ENCODE measurements at regions of chr3 and their contacts with region 1.

Region 1: DNA sequence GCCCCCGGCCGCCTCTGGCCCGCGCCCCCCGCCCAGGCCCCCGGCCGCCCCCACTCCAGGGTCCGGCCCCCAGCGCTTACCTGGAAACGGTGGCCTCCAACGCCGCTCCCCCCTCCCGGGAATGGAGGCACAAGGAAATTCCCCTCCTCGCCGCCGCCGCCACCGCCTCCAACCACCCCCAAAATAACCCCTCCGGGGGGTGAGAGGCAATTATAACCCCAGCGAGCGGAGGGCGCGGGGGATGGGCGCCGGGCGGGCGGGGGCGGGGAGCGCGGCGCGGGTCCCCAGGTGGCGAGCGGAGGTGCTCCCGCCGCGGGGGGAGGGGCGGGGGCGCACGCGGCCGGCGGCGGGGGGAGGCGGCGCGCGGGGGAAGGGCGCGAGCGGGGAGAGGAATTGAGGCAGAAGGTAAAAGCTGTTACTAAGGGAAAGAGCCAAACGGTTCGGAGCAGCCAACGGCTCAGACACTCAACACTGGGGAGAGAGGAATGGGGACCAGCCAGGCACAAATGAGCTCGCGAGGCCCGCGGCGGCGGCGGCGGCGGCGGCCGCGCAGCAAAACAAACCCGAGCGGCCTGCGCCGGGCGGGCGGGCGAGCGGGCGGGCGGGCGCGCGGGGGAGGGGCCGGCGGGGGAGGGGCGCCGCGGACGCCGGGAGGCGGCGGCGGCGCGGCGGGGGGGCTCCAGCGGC is at the start of gene TBL1XR1:
- DNase-seq: peak; percentile 93
- ATAC-seq: peak; percentile 88
- total RNA-seq, gene TBL1XR1: 90.8 TPM

Region 2: DNA sequence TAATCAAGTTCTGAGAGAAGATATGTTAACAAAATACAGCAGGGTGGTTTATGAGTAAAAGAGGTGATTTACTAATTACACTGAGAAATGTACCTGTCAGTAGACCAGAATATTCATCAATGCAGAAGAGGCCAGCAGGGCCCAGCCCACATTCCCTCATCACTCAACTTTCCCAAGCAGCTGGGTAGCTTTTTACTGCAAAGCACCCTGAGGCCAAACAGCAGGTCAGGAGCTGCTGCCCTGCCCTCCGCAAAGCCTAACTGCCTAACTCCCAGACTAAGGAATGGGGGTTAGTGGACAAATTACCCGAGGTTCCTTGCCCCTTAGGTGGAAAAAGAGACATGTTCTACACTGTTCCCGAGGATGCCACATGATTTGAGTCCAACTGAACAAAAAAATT is 108.1 kb before region 1 on chr3:
- intact Hi-C with region 1: no loop called
- DNase-seq: no peak
- ATAC-seq: no peak

Region 3: DNA sequence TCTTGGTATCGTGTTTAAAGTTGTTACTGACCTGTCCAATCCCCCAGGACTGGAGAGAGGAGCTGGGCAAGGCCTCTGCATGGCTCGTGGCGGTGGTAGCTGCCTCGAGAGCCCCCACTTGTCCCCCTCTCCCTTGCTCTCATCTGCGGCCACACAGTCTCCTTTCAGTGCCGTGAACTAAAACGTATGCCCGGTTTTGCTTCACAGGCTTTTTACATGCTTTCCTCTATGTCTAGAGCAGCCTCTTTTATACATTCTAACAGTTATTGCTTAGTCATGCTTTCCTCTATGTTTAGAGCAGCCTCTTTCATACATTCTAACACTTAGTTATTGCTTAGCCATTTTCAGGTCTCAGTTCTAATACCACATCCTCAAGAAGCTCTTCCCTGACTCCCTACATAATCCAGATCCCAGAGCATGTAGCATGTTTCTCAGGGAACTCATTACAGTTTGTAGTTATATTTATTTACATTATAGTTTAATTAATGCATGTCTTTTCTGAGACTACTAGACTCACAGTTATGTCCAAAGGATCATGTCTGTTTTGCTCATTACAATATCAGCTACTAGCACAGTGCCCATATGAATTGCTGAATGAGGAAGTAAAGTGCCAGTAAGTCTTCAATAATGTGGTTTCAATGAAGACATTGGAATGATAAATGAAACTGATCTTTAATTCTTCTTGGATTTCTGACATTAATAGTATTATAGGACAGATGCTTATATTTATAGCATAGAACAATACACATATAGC is 66.6 kb after region 1 on chr3:
- intact Hi-C with region 1: loop called (anchors 10 kb)
- DNase-seq: no peak
- ATAC-seq: no peak